ENCODE measurements at regions of chr1 and their contacts with region 1.

Region 1: DNA sequence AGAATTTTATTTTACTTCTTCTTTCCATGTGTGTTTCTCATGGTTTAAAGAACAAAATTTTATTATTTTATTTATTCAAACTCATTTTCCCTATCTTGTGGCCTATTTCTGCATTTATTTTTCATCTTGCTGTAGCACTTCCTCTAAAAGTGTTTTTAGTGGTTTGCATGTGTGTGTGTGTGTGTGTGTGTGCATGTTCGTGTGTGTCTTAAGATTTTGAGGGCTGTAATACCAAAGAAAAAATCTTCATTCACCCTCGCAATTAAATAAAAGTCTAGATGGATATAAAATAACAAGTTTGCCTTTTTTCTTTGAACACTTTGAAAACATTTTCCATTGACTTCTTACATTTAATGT is 24.6 kb upstream of the FCRL3 start:
- DNase-seq: peak; percentile 86
- ATAC-seq: peak; percentile 21
- H3K4me3 ChIP-seq: peak overlapping the region in 1 of 5 experiments; percentile 45
- H3K4me3 Mint-ChIP-seq: peak overlapping the region; percentile 71
- H3K27ac ChIP-seq: peak overlapping the region; percentile 80 to 94
- H3K27ac Mint-ChIP-seq: peak overlapping the region; percentile 98
- H3K4me1 ChIP-seq: peaks cover 65 to 69% of the 10 kb centered on the region in 2 donors
- H3K4me1 Mint-ChIP-seq: peaks cover 74% of the 10 kb centered on the region
- H3K27me3 ChIP-seq: no peaks in the 10 kb centered on the region
- H3K27me3 Mint-ChIP-seq: no peaks in the 10 kb centered on the region
- CTCF ChIP-seq: no peak

Region 2: DNA sequence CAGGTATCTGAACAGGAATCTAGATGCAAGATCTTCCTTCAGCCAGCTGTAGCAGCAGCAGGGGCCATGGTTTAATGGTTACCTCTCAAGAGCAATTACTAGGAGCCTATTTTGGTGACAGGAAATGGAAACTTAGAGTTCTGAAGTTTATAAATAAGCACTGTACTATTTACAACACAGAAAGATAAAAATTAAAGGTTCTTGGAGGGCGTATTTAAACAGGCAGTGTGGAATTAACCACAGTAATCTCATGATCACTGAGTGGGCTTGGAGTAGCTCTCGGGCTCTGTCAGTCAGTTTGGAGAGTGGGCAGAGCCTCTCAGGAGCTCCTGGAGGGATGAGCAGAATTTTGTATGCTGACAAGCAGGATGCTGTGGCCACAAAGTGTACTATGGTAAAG is 162.7 kb before region 1 on chr1:
- CTCF ChIA-PET with region 1: no interaction called
- POLR2A ChIA-PET with region 1: no interaction called
- intact Hi-C with region 1: loop called (anchors 1 kb)
- DNase-seq: no peak
- ATAC-seq: peak; percentile 19
- H3K4me3 ChIP-seq: peak overlapping the region in 3 of 5 experiments; percentile 13 to 22 (median 18)
- H3K4me3 Mint-ChIP-seq: peak overlapping the region; percentile 68
- H3K27ac ChIP-seq: peak overlapping the region in 1 of 2 donors; percentile 15
- H3K27ac Mint-ChIP-seq: peak overlapping the region; percentile 51
- H3K4me1 ChIP-seq: peaks cover 64 to 65% of the 10 kb centered on the region in 2 donors
- H3K4me1 Mint-ChIP-seq: peaks cover 58% of the 10 kb centered on the region
- H3K27me3 ChIP-seq: no peaks in the 10 kb centered on the region
- H3K27me3 Mint-ChIP-seq: no peaks in the 10 kb centered on the region
- CTCF ChIP-seq: no peak

Region 3: DNA sequence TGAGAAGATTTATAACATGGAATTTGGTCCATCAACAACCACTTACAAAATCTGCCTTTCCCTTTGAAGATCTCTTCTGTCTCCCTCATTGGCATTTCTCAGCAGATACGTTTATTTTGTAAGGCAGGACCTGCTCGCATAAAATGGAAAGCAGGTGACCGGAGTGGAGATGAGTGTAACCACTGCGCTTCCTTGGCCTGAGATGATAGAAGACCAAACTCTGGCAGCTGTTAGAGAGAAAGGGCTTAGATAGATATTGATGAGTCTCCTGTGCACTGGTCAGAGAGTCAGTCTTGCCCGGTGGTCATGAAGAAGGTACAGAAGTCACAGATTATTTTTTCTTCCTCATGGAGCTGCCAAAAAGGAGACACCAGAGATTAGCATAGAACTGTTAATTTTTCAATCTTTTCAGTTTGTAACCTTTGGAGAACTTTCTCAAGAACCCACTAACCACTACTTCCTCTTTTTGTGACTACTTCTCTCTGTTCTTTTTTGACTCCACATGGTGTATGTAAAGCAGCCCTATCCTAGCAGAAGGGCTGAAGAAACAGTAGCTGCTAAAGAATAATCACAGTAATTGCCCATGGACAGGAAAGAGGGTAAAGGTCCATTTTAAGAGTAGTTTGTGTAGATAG is 72.2 kb before region 1 on chr1:
- CTCF ChIA-PET with region 1: no interaction called
- POLR2A ChIA-PET with region 1: no interaction called
- intact Hi-C with region 1: loop called (anchors 5 kb)
- DNase-seq: peak; percentile 79
- ATAC-seq: peak; percentile 96
- H3K4me3 ChIP-seq: peak overlapping the region in 3 of 5 experiments; percentile 12 to 45 (median 41)
- H3K4me3 Mint-ChIP-seq: peak overlapping the region; percentile 75
- H3K27ac ChIP-seq: peak overlapping the region; percentile 14
- H3K27ac Mint-ChIP-seq: peak overlapping the region; percentile 43
- H3K4me1 ChIP-seq: peaks cover 33 to 42% of the 10 kb centered on the region in 2 donors
- H3K4me1 Mint-ChIP-seq: peaks cover 39% of the 10 kb centered on the region
- H3K27me3 ChIP-seq: no peaks in the 10 kb centered on the region
- H3K27me3 Mint-ChIP-seq: no peaks in the 10 kb centered on the region
- CTCF ChIP-seq: no peak

Region 4: GRCh38 chr1:157704878-157705277 is 20.3 kb before region 1 on chr1:
- CTCF ChIA-PET with region 1: interaction called, 5 read pairs
- POLR2A ChIA-PET with region 1: interaction called, 9 read pairs
- intact Hi-C with region 1: loop called (anchors 1 kb)
- DNase-seq: peak; percentile 72
- ATAC-seq: peak; percentile 80
- H3K4me3 ChIP-seq: no peak overlapping the region
- H3K4me3 Mint-ChIP-seq: peak overlapping the region; percentile 68
- H3K27ac ChIP-seq: peak overlapping the region; percentile 24 to 76
- H3K27ac Mint-ChIP-seq: peak overlapping the region; percentile 90
- H3K4me1 ChIP-seq: peaks cover 84 to 87% of the 10 kb centered on the region in 2 donors
- H3K4me1 Mint-ChIP-seq: peaks cover 94% of the 10 kb centered on the region
- H3K27me3 ChIP-seq: no peaks in the 10 kb centered on the region
- H3K27me3 Mint-ChIP-seq: no peaks in the 10 kb centered on the region
- CTCF ChIP-seq: no peak

Region 5: GRCh38 chr1:157766792-157767191 is 41.6 kb after region 1 on chr1:
- CTCF ChIA-PET with region 1: interaction called, 7 read pairs
- POLR2A ChIA-PET with region 1: interaction called, 13 read pairs
- intact Hi-C with region 1: no loop called
- DNase-seq: no peak
- ATAC-seq: no peak
- H3K4me3 ChIP-seq: no peak overlapping the region
- H3K4me3 Mint-ChIP-seq: no peak overlapping the region
- H3K27ac ChIP-seq: peak overlapping the region in 1 of 2 donors; percentile 59
- H3K27ac Mint-ChIP-seq: peak overlapping the region; percentile 80
- H3K4me1 ChIP-seq: peaks cover 27% of the 10 kb centered on the region in 2 donors
- H3K4me1 Mint-ChIP-seq: peaks cover 62% of the 10 kb centered on the region
- H3K27me3 ChIP-seq: no peaks in the 10 kb centered on the region
- H3K27me3 Mint-ChIP-seq: no peaks in the 10 kb centered on the region
- CTCF ChIP-seq: no peak

Region 6: GRCh38 chr1:157781048-157781447 is 55.8 kb after region 1 on chr1:
- CTCF ChIA-PET with region 1: interaction called, 5 read pairs
- POLR2A ChIA-PET with region 1: interaction called, 3 read pairs
- intact Hi-C with region 1: loop called (anchors 2 kb)
- DNase-seq: peak; percentile 45
- ATAC-seq: peak; percentile 6
- H3K4me3 ChIP-seq: peak overlapping the region in 1 of 5 experiments; percentile 17
- H3K4me3 Mint-ChIP-seq: peak overlapping the region; percentile 64
- H3K27ac ChIP-seq: peak overlapping the region; percentile 31 to 53
- H3K27ac Mint-ChIP-seq: peak overlapping the region; percentile 93
- H3K4me1 ChIP-seq: peaks cover 83 to 90% of the 10 kb centered on the region in 2 donors
- H3K4me1 Mint-ChIP-seq: peaks cover 87% of the 10 kb centered on the region
- H3K27me3 ChIP-seq: no peaks in the 10 kb centered on the region
- H3K27me3 Mint-ChIP-seq: no peaks in the 10 kb centered on the region
- CTCF ChIP-seq: no peak

Region 7: DNA sequence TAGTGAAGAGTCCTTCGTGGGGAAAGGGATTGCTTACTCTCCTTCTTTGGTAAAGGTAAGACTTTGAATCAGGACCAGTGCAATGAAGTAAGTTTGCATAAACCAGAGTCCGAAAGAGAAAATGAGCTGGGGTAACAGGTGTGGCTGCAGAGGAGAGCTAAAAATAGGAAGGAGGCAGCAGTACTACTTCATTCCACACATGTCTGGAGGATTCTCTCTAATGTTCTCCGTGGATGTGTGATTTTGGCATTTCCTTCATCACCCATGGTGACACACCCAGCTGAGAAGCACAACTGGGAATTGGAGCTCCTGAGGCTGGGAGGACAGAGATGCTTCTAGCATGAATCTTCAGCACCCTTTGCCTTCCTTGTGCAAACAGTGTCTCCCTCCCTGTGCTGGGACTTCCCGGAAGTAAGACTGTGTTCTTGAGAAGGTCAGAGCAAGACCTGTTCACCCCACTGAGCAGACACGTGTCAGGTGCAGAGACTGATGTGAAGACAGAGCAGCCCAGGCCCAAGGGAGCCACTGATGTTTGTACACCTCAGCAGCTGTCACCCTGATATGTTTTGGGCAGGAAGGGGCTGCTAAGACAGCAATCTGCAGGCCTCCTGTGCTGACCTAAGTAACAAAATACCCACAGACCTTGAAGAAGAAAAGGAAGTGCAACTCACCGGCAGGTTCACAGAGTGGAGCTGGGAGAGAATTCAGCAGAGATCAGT is 81.4 kb after region 1 on chr1:
- CTCF ChIA-PET with region 1: interaction called, 8 read pairs
- POLR2A ChIA-PET with region 1: interaction called, 4 read pairs
- intact Hi-C with region 1: loop called (anchors 1 kb)
- DNase-seq: peak; percentile 92
- ATAC-seq: peak; percentile 92
- H3K4me3 ChIP-seq: peak overlapping the region; percentile 2 to 45 (median 28)
- H3K4me3 Mint-ChIP-seq: peak overlapping the region; percentile 84
- H3K27ac ChIP-seq: peak overlapping the region; percentile 71 to 83
- H3K27ac Mint-ChIP-seq: peak overlapping the region; percentile 87
- H3K4me1 ChIP-seq: peaks cover 86 to 98% of the 10 kb centered on the region in 2 donors
- H3K4me1 Mint-ChIP-seq: peaks cover 87% of the 10 kb centered on the region
- H3K27me3 ChIP-seq: no peaks in the 10 kb centered on the region
- H3K27me3 Mint-ChIP-seq: no peaks in the 10 kb centered on the region
- CTCF ChIP-seq: no peak